ENCODE measurements at regions of chr7 and their contacts with region 1.

Region 1: DNA sequence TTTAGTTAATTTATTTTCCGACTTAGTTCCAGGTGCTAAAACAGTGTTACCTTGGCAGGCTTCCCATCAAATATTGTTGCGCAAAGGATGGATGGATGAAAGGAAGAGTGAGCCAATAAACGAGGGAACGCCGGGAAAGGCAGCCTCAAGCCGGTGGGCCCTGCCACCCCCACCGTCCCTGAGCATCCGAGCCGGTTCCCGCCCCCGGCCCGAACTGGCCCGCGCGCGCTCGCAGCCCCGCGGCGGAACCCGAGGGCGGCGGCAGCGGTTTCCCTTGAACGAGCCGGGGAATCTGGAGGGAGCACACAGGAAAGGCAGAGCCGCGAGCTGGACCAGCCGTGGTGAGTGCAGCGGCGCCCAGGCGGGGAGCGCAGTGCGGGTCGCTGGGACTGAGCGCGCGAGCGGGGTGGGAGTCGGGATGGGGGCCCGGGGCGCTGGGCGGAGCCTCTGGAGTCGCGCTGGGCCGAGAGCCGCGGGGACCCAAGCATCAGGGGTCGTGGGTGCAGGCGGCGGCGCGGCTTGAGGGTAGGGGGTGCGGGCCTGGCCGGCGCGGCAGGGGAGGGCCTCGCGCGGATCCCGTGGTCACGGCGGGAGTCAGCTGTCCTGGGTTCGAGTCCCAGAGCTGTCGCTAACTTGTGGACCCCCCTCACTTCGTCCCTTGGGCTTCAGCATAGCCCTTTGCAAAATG is at the start of gene AGK:
- DNase-seq: peak; percentile 79
- H3K4me3 Mint-ChIP-seq: peak within 1 kb of the TSS; percentile 91
- H3K27ac Mint-ChIP-seq: peak within 1 kb of the TSS; percentile 97
- H3K4me1 Mint-ChIP-seq: peaks cover 50% of the 10 kb centered on the region
- H3K27me3 Mint-ChIP-seq: no peaks in the 10 kb centered on the region
- total RNA-seq, gene AGK: 174 and 179 TPM in 2 replicates

Region 2: GRCh38 chr7:141072548-141073172 is 478.6 kb before region 1 on chr7:
- intact Hi-C with region 1: loop called (anchors 5 kb)
- DNase-seq: peak; percentile 40
- H3K4me3 Mint-ChIP-seq: peak overlapping the region; percentile 79
- H3K27ac Mint-ChIP-seq: no peak overlapping the region
- H3K4me1 Mint-ChIP-seq: peaks cover 36% of the 10 kb centered on the region
- H3K27me3 Mint-ChIP-seq: peaks cover 39% of the 10 kb centered on the region

Region 3: GRCh38 chr7:141568227-141568626 is 17.0 kb after region 1 on chr7:
- intact Hi-C with region 1: no loop called
- DNase-seq: no peak
- H3K4me3 Mint-ChIP-seq: no peak overlapping the region
- H3K27ac Mint-ChIP-seq: no peak overlapping the region
- H3K4me1 Mint-ChIP-seq: peaks cover 70% of the 10 kb centered on the region
- H3K27me3 Mint-ChIP-seq: no peaks in the 10 kb centered on the region